ENCODE measurements at regions of chr1 and their contacts with region 1.

Region 1: DNA sequence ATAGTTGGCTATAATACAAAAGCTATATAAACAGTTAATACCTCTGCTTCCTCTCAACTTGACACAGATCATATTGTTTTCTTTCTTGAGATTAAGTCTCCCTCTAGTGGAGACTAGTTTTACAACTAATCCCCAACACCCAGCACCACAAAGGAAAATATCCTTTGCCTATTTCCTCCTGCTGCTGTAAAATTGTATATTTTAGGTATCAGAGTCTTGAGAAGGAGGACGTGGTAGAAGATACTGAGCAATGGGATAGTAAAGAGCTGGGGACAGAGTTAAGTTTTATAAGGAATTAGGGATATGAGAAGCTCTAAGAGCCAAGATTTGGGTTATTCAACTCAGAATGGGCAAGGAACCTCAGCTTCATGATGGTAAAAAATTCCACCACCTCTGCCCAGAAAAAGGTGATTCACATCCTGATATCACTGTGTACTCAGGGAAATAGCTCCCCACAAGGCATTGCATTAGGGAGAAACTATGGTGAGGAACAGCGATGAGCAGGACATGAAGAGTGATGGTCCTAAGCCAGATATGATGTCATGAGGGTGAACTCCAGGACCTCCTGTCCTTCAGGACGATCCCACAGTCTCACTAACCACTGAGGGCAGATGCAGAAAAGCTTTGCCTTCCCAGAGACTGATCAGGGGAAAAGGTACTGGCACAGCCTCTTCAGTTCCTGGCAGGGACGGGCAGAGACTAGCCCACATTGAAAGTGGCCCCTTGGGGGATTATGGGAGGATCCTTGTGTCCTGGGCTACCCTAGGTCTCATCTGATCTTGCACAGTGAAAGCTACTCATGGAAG is 14.7 kb upstream of the CFAP126 start:
- DNase-seq: peak in 4 of 5 donors; percentile 48 to 61 (median 56)
- H3K4me3 ChIP-seq: no peak overlapping the region
- H3K4me3 Mint-ChIP-seq: no peak overlapping the region
- H3K27ac ChIP-seq: no peak overlapping the region
- H3K27ac Mint-ChIP-seq: peak overlapping the region in 3 of 7 donors; percentile 3 to 76 (median 7)
- H3K4me1 ChIP-seq: peaks cover 17% of the 10 kb centered on the region
- H3K4me1 Mint-ChIP-seq: peaks cover 7 to 14% (median 13%) of the 10 kb centered on the region in 4 donors
- H3K27me3 ChIP-seq: no peaks in the 10 kb centered on the region
- H3K27me3 Mint-ChIP-seq: no peaks in the 10 kb centered on the region

Region 2: GRCh38 chr1:161209790-161210409 is 172.5 kb before region 1 on chr1:
- CTCF ChIA-PET with region 1: interaction called, 44 read pairs
- POLR2A ChIA-PET with region 1: no interaction called
- intact Hi-C with region 1: no loop called
- DNase-seq: peak; percentile 64 to 74 (median 68)
- H3K4me3 ChIP-seq: no peak overlapping the region
- H3K4me3 Mint-ChIP-seq: no peak overlapping the region
- H3K27ac ChIP-seq: no peak overlapping the region
- H3K27ac Mint-ChIP-seq: peak overlapping the region; percentile 57 to 88 (median 68)
- H3K4me1 ChIP-seq: peaks cover 25% of the 10 kb centered on the region
- H3K4me1 Mint-ChIP-seq: peaks cover 20 to 38% (median 27%) of the 10 kb centered on the region in 4 donors
- H3K27me3 ChIP-seq: no peaks in the 10 kb centered on the region
- H3K27me3 Mint-ChIP-seq: no peaks in the 10 kb centered on the region

Region 3: DNA sequence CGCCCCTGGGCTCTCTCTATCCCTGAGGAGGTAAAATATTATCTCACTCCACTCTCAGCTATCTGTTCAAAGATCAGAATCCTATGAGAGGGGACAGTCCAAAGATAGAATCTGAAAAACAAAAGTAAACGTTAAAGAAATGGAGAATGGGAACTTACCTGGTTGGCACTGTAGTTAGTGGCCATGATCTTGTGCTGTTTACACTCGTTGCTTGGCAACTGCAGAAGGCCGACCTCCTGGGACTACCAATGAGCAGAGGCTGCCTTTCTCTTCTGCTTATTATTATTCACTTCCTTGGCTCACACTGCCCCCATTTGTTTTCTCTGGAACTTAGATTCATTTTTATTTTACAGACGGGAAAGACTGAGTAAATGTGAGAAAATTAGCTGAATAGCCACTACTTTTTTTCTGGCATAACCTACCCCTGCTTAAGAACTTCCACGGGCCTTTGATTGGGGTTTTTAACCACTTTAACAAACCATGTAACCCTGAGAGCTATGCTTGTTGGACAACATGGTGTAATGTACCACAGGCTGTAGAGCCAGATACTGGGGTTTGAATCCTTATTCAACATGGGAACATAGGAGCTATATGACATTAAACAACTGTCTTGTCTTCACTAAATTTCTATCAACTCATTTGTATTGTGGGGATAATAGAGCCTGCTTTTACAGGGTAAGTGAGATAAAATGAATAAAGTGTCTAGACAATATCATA is 14.6 kb before region 1 on chr1 and contains the start of gene CFAP126:
- CTCF ChIA-PET with region 1: interaction called, 19 read pairs
- POLR2A ChIA-PET with region 1: interaction called, 3 read pairs
- intact Hi-C with region 1: no loop called
- DNase-seq: peak; percentile 62 to 84 (median 75)
- H3K4me3 ChIP-seq: no peak within 1 kb of the TSS
- H3K4me3 Mint-ChIP-seq: no peak within 1 kb of the TSS
- H3K27ac ChIP-seq: peak within 1 kb of the TSS; percentile 35
- H3K27ac Mint-ChIP-seq: peak within 1 kb of the TSS; percentile 63 to 93 (median 85)
- H3K4me1 ChIP-seq: peaks cover 6% of the 10 kb centered on the region
- H3K4me1 Mint-ChIP-seq: peaks cover 7 to 9% (median 8%) of the 10 kb centered on the region in 4 donors
- H3K27me3 ChIP-seq: no peaks in the 10 kb centered on the region
- H3K27me3 Mint-ChIP-seq: no peaks in the 10 kb centered on the region
- total RNA-seq, gene CFAP126: not detected